ENCODE measurements at regions of chr1 and their contacts with region 1.

Region 1: GRCh38 chr1:8314346-8315280 is 3.3 kb upstream of the SLC45A1 start:
- DNase-seq: peak; percentile 59 to 83 (median 76)
- ATAC-seq: peak; percentile 96
- H3K4me3 ChIP-seq: no peak overlapping the region
- H3K27ac ChIP-seq: no peak overlapping the region
- H3K4me1 ChIP-seq: peaks cover 6 to 33% of the 10 kb centered on the region in 2 donors
- H3K27me3 ChIP-seq: peaks cover 0 to 52% of the 10 kb centered on the region in 2 donors
- CTCF ChIP-seq: peak; percentile 80 to 89

Region 2: DNA sequence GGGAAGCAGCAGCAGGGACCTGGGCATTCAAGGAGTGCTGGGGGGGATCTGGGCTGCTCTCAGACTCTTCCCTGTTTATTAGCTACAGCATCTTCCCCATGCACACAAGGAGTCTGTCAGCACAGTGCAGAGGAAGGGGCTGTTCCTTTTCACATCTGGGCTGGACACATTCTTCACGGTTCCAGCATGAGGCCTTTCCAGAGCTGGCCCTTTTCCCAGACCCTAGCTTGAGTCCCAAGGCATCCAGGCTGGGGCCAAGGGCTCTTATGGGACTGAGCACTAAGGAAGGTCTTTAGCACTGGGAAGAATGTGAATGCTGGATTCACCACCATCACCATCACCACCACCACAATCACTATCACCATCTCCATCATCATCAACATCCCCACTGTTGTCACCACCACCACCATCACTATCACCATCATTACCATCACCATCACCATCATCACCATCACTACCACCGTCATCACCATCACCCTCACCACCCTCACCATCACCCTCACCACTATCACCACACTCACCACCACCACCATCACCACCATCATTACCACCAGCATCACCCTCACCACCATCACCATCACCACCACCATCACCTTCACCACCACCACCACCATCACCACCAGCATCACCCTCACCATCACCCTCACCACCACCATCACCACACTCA is 324.7 kb before region 1 on chr1:
- intact Hi-C with region 1: loop called in 1 of 2 experiments (anchors 10 kb)
- DNase-seq: no peak
- ATAC-seq: no peak
- H3K4me3 ChIP-seq: no peak overlapping the region
- H3K27ac ChIP-seq: no peak overlapping the region
- H3K4me1 ChIP-seq: no peaks in the 10 kb centered on the region
- H3K27me3 ChIP-seq: no peaks in the 10 kb centered on the region
- CTCF ChIP-seq: no peak

Region 3: GRCh38 chr1:8026153-8026975 is 288.2 kb before region 1 on chr1 and contains the start of gene ERRFI1:
- intact Hi-C with region 1: loop called in 1 of 2 experiments (anchors 5 kb)
- DNase-seq: peak; percentile 93 to 97 (median 95)
- ATAC-seq: peak; percentile 86
- H3K4me3 ChIP-seq: peak within 1 kb of the TSS; percentile 74 to 81
- H3K27ac ChIP-seq: peak within 1 kb of the TSS; percentile 86 to 88
- H3K4me1 ChIP-seq: peaks cover 17 to 28% of the 10 kb centered on the region in 2 donors
- H3K27me3 ChIP-seq: peaks cover 0 to 45% of the 10 kb centered on the region in 2 donors
- CTCF ChIP-seq: no peak
- polyA plus RNA-seq, gene ERRFI1: 62.7 to 88.8 (median 78.9) TPM